PC-9 (cell line): ENCODE measurements at regions of chr6 and their contacts with region 1.

Region 1: GRCh38 chr6:36600564-36601146 is 6.5 kb downstream of the SRSF3 start:
- DNase-seq: peak in 1 of 2 experiments; percentile 32
- H3K4me3 ChIP-seq: no peak overlapping the region
- H3K27ac ChIP-seq: peak overlapping the region; percentile 33
- H3K4me1 ChIP-seq: peaks cover 56% of the 10 kb centered on the region
- H3K27me3 ChIP-seq: no peaks in the 10 kb centered on the region
- CTCF ChIP-seq: no peak

Region 2: GRCh38 chr6:36280467-36280866 is 320.2 kb before region 1 on chr6:
- CTCF ChIA-PET with region 1: interaction called, 10 read pairs
- POLR2A ChIA-PET with region 1: no interaction called
- intact Hi-C with region 1: no loop called
- DNase-seq: no peak
- H3K4me3 ChIP-seq: no peak overlapping the region
- H3K27ac ChIP-seq: no peak overlapping the region
- H3K4me1 ChIP-seq: peaks cover under 1% of the 10 kb centered on the region; the same call in 1 of the 2 replicates
- H3K27me3 ChIP-seq: no peaks in the 10 kb centered on the region
- CTCF ChIP-seq: no peak

Region 3: DNA sequence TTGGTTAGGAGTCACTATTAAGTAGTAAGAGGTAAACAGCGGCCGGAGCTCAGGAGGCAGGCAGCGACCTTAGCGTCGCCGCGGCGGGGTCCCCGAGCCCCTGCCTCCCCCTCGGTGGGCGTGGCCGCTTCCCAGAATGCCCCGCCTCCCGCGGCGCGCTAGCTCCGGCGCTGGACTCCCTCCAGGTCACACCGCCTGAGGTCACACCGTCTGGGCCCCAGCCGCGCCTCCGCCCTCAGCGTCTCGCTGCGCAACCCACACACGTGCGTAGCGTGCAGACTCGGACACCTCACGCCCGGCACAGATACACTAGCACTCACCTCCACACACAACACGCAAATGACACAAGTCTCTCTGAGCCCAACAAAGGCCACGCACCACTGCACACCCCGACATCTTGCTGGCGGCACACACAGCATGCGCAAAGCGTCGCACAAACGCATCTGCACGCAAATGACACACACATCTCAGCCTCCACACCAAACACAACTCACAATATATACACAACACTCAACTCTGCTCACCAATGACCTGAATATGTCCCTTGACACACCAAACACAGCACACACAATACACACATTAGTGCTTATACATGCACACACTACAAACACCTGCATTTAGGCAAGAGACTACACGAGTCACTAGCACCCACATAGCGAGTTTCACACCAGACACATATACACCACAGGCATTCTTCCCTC is 60.3 kb after region 1 on chr6:
- CTCF ChIA-PET with region 1: no interaction called
- POLR2A ChIA-PET with region 1: no interaction called
- intact Hi-C with region 1: no loop called
- DNase-seq: peak in 1 of 2 experiments; percentile 60
- H3K4me3 ChIP-seq: no peak overlapping the region
- H3K27ac ChIP-seq: no peak overlapping the region
- H3K4me1 ChIP-seq: peaks cover 14% of the 10 kb centered on the region
- H3K27me3 ChIP-seq: no peaks in the 10 kb centered on the region
- CTCF ChIP-seq: no peak